ENCODE measurements at regions of chr7 and their contacts with region 1.

Region 1: DNA sequence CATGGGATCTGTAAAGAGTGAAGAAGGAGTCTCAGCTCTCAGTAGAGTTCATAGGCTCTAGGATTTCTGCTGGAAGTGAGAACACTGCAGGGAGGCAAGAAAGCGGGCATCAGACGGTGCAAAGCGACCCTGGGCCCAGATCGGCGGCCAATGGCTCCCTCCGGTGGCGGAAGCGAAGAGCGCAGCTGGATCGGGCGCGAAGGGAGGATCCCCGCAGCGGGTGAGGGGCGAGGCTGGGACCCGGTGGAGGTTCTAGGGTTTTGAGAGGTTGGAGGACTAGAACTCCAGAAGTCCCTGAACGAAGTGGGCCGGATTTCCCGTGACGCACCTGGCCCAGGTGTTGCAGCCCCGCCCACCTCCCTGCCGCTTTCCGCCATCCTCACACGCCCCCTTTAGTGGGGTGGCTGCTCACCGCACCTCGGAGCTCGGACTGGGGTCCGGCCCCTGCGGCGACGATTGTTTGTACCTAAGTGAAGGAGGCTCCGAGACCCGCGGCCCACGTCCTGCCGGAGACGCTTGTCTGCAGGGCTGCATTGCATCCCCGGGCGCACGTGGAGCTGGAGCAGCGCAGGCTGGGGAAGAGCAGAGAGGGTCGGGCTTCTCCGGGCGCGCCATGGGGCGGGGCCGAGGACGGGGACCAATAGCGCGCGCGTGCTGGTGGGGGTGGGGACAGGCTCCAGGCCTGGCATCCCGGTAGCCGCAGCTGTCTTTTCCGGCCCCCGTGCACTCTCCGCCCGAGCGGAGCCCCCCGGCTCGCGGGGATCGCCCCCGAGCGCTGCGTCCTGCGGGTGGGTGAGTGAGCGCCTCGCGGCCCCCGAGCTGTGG is at the start of gene SLC12A9:
- DNase-seq: peak; percentile 45
- ATAC-seq: peak; percentile 99
- H3K4me3 ChIP-seq: peak within 1 kb of the TSS; percentile 80
- H3K27ac ChIP-seq: peak within 1 kb of the TSS; percentile 74
- H3K4me1 ChIP-seq: peaks cover 3% of the 10 kb centered on the region; the same call in 1 of the 2 replicates
- H3K27me3 ChIP-seq: no peaks in the 10 kb centered on the region
- CTCF ChIP-seq: peak; percentile 95
- total RNA-seq, gene SLC12A9: 31.1 TPM

Region 2: DNA sequence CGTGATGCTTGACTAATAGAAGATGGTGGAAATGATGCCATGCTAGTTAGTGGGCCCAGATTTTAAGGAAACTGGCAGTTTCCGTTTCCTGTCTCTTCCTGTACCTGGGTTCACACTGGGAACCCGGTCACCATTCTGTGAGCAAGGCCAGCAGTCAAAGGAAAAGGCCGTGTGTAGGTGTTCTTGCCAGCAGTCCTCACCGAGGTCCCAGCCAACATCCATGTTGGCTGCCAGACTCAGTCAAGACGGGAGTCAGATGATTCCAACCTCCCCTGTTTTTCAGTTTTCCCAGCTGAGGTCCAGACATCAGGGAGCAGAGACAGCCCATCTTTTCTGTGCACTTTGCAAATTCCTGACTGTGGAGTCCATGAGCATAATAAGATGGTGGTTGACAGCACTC is 509.5 kb before region 1 on chr7:
- CTCF ChIA-PET with region 1: no interaction called
- POLR2A ChIA-PET with region 1: no interaction called
- in situ Hi-C with region 1: no loop called
- intact Hi-C with region 1: no loop called
- DNase-seq: no peak
- ATAC-seq: no peak
- H3K4me3 ChIP-seq: no peak overlapping the region
- H3K27ac ChIP-seq: no peak overlapping the region
- H3K4me1 ChIP-seq: peaks cover 6% of the 10 kb centered on the region
- H3K27me3 ChIP-seq: no peaks in the 10 kb centered on the region
- CTCF ChIP-seq: no peak

Region 3: GRCh38 chr7:100736671-100737070 is 115.6 kb before region 1 on chr7:
- CTCF ChIA-PET with region 1: interaction called, 18 read pairs
- POLR2A ChIA-PET with region 1: no interaction called
- in situ Hi-C with region 1: no loop called
- intact Hi-C with region 1: no loop called
- DNase-seq: no peak
- ATAC-seq: no peak
- H3K4me3 ChIP-seq: no peak overlapping the region
- H3K27ac ChIP-seq: no peak overlapping the region
- H3K4me1 ChIP-seq: no peaks in the 10 kb centered on the region
- H3K27me3 ChIP-seq: no peaks in the 10 kb centered on the region
- CTCF ChIP-seq: no peak

Region 4: DNA sequence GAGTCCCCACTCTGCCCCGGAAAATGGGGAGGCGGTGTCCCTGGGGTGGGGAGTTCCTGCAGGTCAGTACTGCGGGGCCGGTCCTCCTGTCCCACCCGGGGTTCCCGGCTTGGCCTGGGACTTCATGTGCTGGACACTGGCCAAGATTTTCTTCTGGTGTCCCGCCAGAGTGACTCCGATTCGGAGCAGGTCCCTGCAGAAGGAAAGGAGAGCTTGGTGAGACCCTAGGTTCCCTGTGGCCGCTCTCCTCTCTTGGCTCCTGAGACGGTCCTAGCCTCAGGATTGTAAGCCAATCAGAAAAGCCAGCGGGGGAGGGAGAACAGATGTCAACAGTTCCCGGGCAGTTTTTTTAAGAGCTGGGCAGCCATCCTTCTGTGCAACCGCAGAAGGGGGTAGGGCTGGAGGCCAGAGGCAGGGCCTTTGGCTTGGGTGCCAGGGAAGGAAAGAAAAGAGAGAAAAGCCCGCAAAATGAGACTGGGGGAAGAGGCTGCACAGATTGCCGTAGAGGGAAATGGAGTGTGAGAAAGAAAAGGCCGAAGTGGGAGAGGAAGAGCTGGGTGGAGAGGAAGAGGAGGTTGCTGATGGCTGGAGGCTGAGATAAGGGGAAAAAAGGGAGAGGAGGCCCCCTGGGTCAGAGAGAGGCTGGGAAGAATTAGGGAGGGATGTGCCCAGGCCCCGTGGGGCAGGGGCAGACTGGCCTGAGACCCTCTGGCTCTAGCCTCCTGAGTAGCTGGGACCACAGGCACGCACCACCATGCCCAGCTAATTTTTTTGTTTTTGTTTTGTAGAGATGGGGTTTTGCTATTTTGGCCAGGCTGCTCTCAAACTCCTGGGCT is 48.6 kb before region 1 on chr7:
- CTCF ChIA-PET with region 1: interaction called, 20 read pairs
- POLR2A ChIA-PET with region 1: interaction called, 14 read pairs
- in situ Hi-C with region 1: no loop called
- intact Hi-C with region 1: loop called (anchors 5 kb)
- DNase-seq: no peak
- ATAC-seq: peak; percentile 63
- H3K4me3 ChIP-seq: no peak overlapping the region
- H3K27ac ChIP-seq: peak overlapping the region; percentile 99
- H3K4me1 ChIP-seq: peaks cover 59% of the 10 kb centered on the region
- H3K27me3 ChIP-seq: no peaks in the 10 kb centered on the region
- CTCF ChIP-seq: no peak

Region 5: DNA sequence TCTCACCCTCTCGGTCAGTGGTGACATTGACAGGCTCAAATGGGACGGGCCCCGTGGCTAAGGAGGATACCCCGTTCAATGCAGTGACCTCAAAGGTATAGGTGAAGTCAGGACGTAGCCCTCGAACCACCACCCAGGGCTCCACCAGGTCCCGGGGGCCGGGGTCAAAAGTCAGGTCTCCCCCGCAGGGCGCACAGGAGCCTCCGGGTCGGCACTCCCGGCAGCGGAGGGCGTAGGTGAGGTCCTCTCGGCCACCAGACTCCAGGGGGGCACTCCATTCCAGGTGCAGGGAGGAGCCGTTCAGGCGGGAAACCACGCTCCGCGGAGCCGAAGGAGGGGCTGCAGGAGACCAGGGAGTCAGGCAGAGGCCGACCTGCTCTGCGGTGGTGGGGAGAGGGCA is 32.7 kb before region 1 on chr7:
- CTCF ChIA-PET with region 1: no interaction called
- POLR2A ChIA-PET with region 1: interaction called, 12 read pairs
- in situ Hi-C with region 1: no loop called
- intact Hi-C with region 1: no loop called
- DNase-seq: no peak
- ATAC-seq: no peak
- H3K4me3 ChIP-seq: no peak overlapping the region
- H3K27ac ChIP-seq: no peak overlapping the region
- H3K4me1 ChIP-seq: peaks cover 7% of the 10 kb centered on the region
- H3K27me3 ChIP-seq: no peaks in the 10 kb centered on the region
- CTCF ChIP-seq: no peak

Region 6: GRCh38 chr7:100827330-100828227 is 24.7 kb before region 1 on chr7 and contains the start of gene EPHB4:
- CTCF ChIA-PET with region 1: interaction called, 16 read pairs
- POLR2A ChIA-PET with region 1: no interaction called
- in situ Hi-C with region 1: no loop called
- intact Hi-C with region 1: no loop called
- DNase-seq: no peak
- ATAC-seq: peak; percentile 92
- H3K4me3 ChIP-seq: peak within 1 kb of the TSS; percentile 55 to 99
- H3K27ac ChIP-seq: peak within 1 kb of the TSS; percentile 96
- H3K4me1 ChIP-seq: peaks cover 17% of the 10 kb centered on the region
- H3K27me3 ChIP-seq: no peaks in the 10 kb centered on the region
- CTCF ChIP-seq: no peak; the same call in 1 of the 2 replicates
- total RNA-seq, gene EPHB4: 192 TPM